WTC11 (cell line): ENCODE measurements at regions of chr4 and their contacts with region 1.

Region 1: GRCh38 chr4:121514443-121514842 is 133.6 kb upstream of the QRFPR start:
- DNase-seq: peak; percentile 71
- ATAC-seq: peak; percentile 100
- H3K4me3 Mint-ChIP-seq: no peak overlapping the region
- H3K27ac Mint-ChIP-seq: no peak overlapping the region
- H3K4me1 Mint-ChIP-seq: no peaks in the 10 kb centered on the region
- H3K27me3 Mint-ChIP-seq: no peaks in the 10 kb centered on the region
- CTCF ChIP-seq: peak; percentile 70

Region 2: DNA sequence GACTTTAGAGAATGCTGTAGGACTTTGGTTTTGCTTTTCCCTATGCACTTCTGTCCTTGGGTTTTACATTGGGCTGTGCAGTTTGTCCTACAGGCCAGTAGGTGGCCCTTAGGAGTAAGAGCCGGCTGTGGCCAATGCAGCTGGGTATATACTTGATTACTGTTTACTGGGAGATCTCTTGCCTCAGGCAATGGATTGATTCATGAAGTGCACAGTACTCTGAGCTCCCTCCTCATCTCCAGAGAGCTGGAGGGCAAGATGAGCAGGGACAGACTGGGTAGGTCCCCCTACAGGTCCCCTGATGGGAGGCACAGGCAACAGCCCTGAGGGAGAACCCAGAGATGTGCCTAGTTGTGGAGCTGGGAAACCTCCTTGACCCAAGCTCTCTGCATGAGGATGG is 29.8 kb before region 1 on chr4:
- CTCF ChIA-PET with region 1: interaction called, 11 read pairs
- POLR2A ChIA-PET with region 1: no interaction called
- DNase-seq: peak; percentile 38
- ATAC-seq: peak; percentile 99
- H3K4me3 Mint-ChIP-seq: no peak overlapping the region
- H3K27ac Mint-ChIP-seq: no peak overlapping the region
- H3K4me1 Mint-ChIP-seq: no peaks in the 10 kb centered on the region
- H3K27me3 Mint-ChIP-seq: no peaks in the 10 kb centered on the region
- CTCF ChIP-seq: peak; percentile 78

Region 3: GRCh38 chr4:121500861-121501260 is 13.6 kb before region 1 on chr4:
- CTCF ChIA-PET with region 1: interaction called, 13 read pairs
- POLR2A ChIA-PET with region 1: no interaction called
- DNase-seq: no peak
- ATAC-seq: no peak
- H3K4me3 Mint-ChIP-seq: no peak overlapping the region
- H3K27ac Mint-ChIP-seq: no peak overlapping the region
- H3K4me1 Mint-ChIP-seq: peaks cover 18% of the 10 kb centered on the region
- H3K27me3 Mint-ChIP-seq: no peaks in the 10 kb centered on the region; the same call in 1 of the 2 replicates
- CTCF ChIP-seq: no peak